ENCODE measurements at regions of chr4 and their contacts with region 1.

Region 1: GRCh38 chr4:110510955-110511544 is 35.1 kb downstream of the ENPEP start:
- DNase-seq: no peak
- ATAC-seq: peak; percentile 86
- H3K4me3 ChIP-seq: no peak overlapping the region
- H3K27ac ChIP-seq: no peak overlapping the region
- H3K4me1 ChIP-seq: no peaks in the 10 kb centered on the region
- H3K27me3 ChIP-seq: no peaks in the 10 kb centered on the region
- CTCF ChIP-seq: peak; percentile 53 to 70 (median 53); a peak in 5 of 6 replicates
- EP300 ChIP-seq: no peak
- POLR2A ChIP-seq: no peak
- RAD21 ChIP-seq: peak; percentile 75

Region 2: DNA sequence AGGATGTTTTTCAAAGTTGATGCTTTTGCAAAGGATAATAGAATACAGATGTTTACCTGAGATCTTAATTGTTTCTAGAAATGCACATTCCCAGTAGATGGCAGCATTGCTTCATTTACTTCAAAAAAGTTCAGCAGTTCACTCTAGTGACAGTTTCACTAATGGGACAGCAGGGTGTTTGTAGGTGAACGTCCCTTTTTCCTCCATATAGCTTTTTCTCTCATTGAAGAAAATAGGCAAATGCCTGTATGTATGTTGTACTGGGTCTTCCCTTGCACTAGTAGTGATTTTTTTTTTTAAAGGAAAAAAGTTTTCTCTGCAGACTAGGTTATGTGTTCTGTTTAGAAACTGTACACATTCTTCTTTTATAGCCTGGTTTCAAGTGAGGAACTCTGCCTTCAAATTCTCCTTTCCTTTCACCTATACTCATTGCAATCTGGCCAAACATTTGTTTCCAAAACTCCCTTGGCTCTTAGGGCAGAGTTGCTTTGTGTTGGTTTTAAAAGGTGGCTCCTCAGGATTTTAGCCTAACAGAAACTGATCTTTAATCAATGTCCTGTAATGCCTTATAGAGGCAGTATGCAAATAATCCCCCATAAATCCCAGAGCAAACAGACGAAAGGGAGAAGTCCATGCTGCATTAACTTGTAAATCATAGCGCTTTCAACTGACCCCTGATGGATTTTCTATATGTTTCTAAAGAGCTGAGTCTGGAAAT is 512.0 kb before region 1 on chr4:
- CTCF ChIA-PET with region 1: interaction called, 812 read pairs
- POLR2A ChIA-PET with region 1: no interaction called
- RAD21 ChIA-PET with region 1: interaction called, 35 read pairs
- SMC1A ChIA-PET with region 1: interaction called, 114 read pairs
- in situ Hi-C with region 1: loop called (anchors 5 kb)
- intact Hi-C with region 1: loop called (anchors 1 kb)
- DNase-seq: peak; percentile 38
- ATAC-seq: peak; percentile 65
- H3K4me3 ChIP-seq: no peak overlapping the region
- H3K27ac ChIP-seq: no peak overlapping the region
- H3K4me1 ChIP-seq: peaks cover 15% of the 10 kb centered on the region
- H3K27me3 ChIP-seq: no peaks in the 10 kb centered on the region
- CTCF ChIP-seq: peak; percentile 48 to 79 (median 67); a peak in 5 of 6 replicates
- EP300 ChIP-seq: no peak
- POLR2A ChIP-seq: no peak
- RAD21 ChIP-seq: peak; percentile 85

Region 3: DNA sequence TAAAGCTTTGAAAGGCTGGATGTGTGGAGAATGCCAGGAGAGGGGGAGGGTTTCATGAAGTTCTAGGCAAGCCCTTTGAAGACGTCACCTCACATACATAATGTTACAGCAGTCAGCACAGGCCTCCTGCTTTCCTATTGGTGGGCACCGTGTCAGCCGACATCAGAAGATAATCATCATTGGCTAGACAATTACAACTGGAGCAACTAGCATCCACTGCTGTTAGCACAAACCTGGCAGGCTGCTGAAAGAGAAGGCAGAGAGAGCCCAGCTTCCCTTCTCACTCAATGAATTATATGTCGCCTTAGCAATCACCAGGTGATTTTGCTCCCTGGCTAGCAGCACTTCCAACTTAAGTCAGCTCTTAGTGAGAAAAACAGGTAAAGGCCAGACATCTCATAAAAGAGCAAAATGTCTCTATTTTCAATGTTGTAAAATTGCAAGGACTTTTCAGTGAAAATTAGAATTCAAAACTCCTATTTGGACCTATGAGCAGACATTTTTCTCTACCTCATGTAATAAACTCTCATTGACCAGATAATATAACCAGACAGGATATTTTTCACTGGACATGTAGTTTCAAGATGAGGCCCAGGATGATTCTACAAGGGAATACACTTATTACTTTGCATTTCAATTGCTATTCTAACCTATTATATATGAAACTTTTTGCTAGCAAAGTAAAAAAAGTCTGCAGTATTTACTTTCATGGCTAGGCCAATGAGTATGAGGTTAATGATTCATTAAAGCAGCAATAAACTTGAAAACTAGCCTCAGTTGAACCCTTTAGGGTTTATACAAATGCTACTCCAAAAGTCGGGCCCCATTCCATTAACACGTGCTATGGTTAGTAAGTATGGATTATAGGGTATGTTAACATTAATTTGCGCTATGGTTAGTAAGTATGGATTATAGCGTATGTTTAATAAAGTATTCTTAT is 317.0 kb before region 1 on chr4:
- CTCF ChIA-PET with region 1: interaction called, 5 read pairs
- POLR2A ChIA-PET with region 1: no interaction called
- RAD21 ChIA-PET with region 1: no interaction called
- SMC1A ChIA-PET with region 1: no interaction called
- in situ Hi-C with region 1: no loop called
- intact Hi-C with region 1: loop called (anchors 5 kb)
- DNase-seq: peak; percentile 95
- ATAC-seq: peak; percentile 74
- H3K4me3 ChIP-seq: no peak overlapping the region
- H3K27ac ChIP-seq: peak overlapping the region; percentile 75
- H3K4me1 ChIP-seq: peaks cover 19% of the 10 kb centered on the region
- H3K27me3 ChIP-seq: no peaks in the 10 kb centered on the region
- CTCF ChIP-seq: no peak
- EP300 ChIP-seq: no peak
- POLR2A ChIP-seq: peak; percentile 89
- RAD21 ChIP-seq: no peak

Region 4: GRCh38 chr4:110296892-110297291 is 214.2 kb before region 1 on chr4:
- CTCF ChIA-PET with region 1: interaction called, 3 read pairs
- POLR2A ChIA-PET with region 1: no interaction called
- RAD21 ChIA-PET with region 1: no interaction called
- SMC1A ChIA-PET with region 1: interaction called, 11 read pairs
- in situ Hi-C with region 1: no loop called
- intact Hi-C with region 1: no loop called
- DNase-seq: peak; percentile 38
- ATAC-seq: peak; percentile 97
- H3K4me3 ChIP-seq: no peak overlapping the region
- H3K27ac ChIP-seq: no peak overlapping the region
- H3K4me1 ChIP-seq: peaks cover 9% of the 10 kb centered on the region
- H3K27me3 ChIP-seq: peaks cover 0 to 4% of the 10 kb centered on the region in 2 experiments; a peak in 1 of 4 replicates
- CTCF ChIP-seq: no peak
- EP300 ChIP-seq: peak; percentile 54 to 75; a peak in 3 of 4 replicates
- POLR2A ChIP-seq: no peak
- RAD21 ChIP-seq: no peak

Region 5: GRCh38 chr4:110344162-110344561 is 166.9 kb before region 1 on chr4:
- CTCF ChIA-PET with region 1: interaction called, 67 read pairs
- POLR2A ChIA-PET with region 1: no interaction called
- RAD21 ChIA-PET with region 1: interaction called, 23 read pairs
- SMC1A ChIA-PET with region 1: interaction called, 20 read pairs
- in situ Hi-C with region 1: loop called (anchors 10 kb)
- intact Hi-C with region 1: loop called (anchors 10 kb)
- DNase-seq: no peak
- ATAC-seq: no peak
- H3K4me3 ChIP-seq: no peak overlapping the region
- H3K27ac ChIP-seq: no peak overlapping the region
- H3K4me1 ChIP-seq: no peaks in the 10 kb centered on the region
- H3K27me3 ChIP-seq: 0 out of 4 replicates have a peak, but pooled peaks cover 0 to 2% of the 10 kb centered on the region in 2 experiments
- CTCF ChIP-seq: peak in 2 of 3 experiments; percentile 3 to 29; a peak in 2 of 6 replicates
- EP300 ChIP-seq: no peak
- POLR2A ChIP-seq: no peak
- RAD21 ChIP-seq: peak; percentile 60